Prostate gland (tissue), 2 donors: ENCODE measurements at regions of chr14 and their contacts with region 1.

Region 1: GRCh38 chr14:49633640-49634546 is 1.2 kb downstream of the DNAAF2 start:
- DNase-seq: peak; percentile 91
- H3K4me3 ChIP-seq: peak overlapping the region; percentile 75 to 90
- H3K27ac ChIP-seq: peak overlapping the region; percentile 94 to 96
- H3K4me1 ChIP-seq: no peaks in the 10 kb centered on the region
- H3K27me3 ChIP-seq: no peaks in the 10 kb centered on the region
- CTCF ChIP-seq: peak; percentile 79 to 91 (median 90)
- POLR2A ChIP-seq: peak; percentile 36

Region 2: GRCh38 chr14:49692811-49693734 is 59.2 kb after region 1 on chr14 and contains the start of gene KLHDC1:
- intact Hi-C with region 1: loop called (anchors 1 kb)
- DNase-seq: peak; percentile 72
- H3K4me3 ChIP-seq: peak within 1 kb of the TSS; percentile 70 to 76
- H3K27ac ChIP-seq: peak within 1 kb of the TSS; percentile 93 to 96
- H3K4me1 ChIP-seq: no peaks in the 10 kb centered on the region
- H3K27me3 ChIP-seq: no peaks in the 10 kb centered on the region
- CTCF ChIP-seq: no peak
- POLR2A ChIP-seq: peak; percentile 74
- total RNA-seq, gene KLHDC1: 4.6 to 7.7 TPM

Region 3: GRCh38 chr14:49767562-49768300 is 133.8 kb after region 1 on chr14 and contains the start of gene KLHDC2:
- intact Hi-C with region 1: loop called (anchors 2 kb)
- DNase-seq: peak; percentile 87
- H3K4me3 ChIP-seq: peak within 1 kb of the TSS; percentile 96 to 98
- H3K27ac ChIP-seq: peak within 1 kb of the TSS; percentile 91 to 97
- H3K4me1 ChIP-seq: no peaks in the 10 kb centered on the region
- H3K27me3 ChIP-seq: no peaks in the 10 kb centered on the region
- CTCF ChIP-seq: peak; percentile 24 to 60 (median 57)
- POLR2A ChIP-seq: peak; percentile 98
- total RNA-seq, gene KLHDC2: 78.4 to 83.2 TPM

Region 4: DNA sequence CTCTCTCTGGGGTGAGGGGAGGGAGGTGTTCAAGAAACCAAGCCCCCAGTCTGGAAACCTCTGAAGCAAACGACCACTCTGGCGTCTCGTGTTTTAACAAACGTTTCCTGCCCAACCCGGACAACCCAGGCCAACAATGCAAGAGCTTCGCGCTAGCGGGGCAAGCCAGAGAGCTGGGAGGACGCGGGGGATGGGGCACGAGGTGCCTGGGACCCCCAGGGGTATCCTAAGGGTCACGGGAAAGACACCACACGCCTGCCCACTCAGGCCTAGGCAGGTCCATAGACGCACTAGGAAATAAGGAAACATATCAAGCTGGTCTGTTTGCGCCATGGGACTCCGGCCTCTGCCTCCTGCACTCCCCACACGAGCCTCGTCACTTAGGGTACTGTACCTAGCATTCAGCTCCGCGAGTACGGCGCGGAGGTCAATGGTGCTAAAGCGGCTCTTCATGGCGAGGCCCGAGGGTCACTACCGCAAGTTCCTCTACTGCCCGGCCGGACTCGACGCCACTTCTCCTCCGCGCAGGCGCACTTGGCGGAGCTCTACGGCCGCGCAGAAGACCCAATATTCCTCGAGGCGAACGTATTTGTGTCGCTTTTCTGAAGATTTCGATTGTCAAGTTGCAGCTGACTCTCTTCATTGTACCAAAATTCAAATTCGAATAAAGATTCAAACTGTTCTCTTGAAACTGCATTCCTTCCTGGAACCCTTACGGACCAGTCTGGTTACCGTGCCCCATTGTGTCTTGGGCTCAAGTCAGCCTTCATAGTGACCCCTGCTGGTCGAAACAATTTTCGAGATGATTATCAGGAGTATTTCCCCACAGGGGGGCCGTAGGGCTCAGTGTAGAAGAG is 218.6 kb after region 1 on chr14 and contains the start of gene NEMF:
- intact Hi-C with region 1: loop called (anchors 5 kb)
- DNase-seq: peak; percentile 82
- H3K4me3 ChIP-seq: peak within 1 kb of the TSS; percentile 59 to 72
- H3K27ac ChIP-seq: peak within 1 kb of the TSS; percentile 81 to 84
- H3K4me1 ChIP-seq: peaks cover 3% of the 10 kb centered on the region
- H3K27me3 ChIP-seq: no peaks in the 10 kb centered on the region
- CTCF ChIP-seq: peak; percentile 70 to 84 (median 84)
- POLR2A ChIP-seq: peak; percentile 63
- total RNA-seq, gene NEMF: 63.9 to 71.7 TPM